ENCODE measurements at regions of chr17 and their contacts with region 1.

Region 1: GRCh38 chr17:82450170-82451106 is at the start of gene CYBC1:
- DNase-seq: peak; percentile 96
- H3K4me3 Mint-ChIP-seq: peak within 1 kb of the TSS; percentile 96
- H3K27ac Mint-ChIP-seq: peak within 1 kb of the TSS; percentile 99
- H3K4me1 Mint-ChIP-seq: peaks cover 49% of the 10 kb centered on the region
- H3K27me3 Mint-ChIP-seq: no peaks in the 10 kb centered on the region
- total RNA-seq, gene CYBC1: 308 to 313 TPM

Region 2: DNA sequence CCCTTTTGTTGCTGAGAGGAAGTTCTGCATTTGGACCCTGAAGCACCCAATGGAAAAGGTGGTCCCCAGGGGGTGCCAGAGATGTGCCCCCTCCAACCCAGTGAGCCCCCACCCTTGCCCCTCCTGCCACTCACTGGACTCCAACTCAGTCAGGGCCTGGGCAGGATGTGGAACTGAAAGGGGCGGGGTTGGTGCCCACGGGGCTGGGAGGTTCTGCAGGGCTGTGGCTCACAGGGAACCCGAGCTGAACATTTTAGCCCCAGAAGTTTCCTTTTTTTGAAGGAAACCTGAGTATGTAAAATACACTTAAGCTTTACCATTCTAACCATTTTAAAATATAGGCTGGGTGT is 16.2 kb before region 1 on chr17:
- CTCF ChIA-PET with region 1: no interaction called
- POLR2A ChIA-PET with region 1: interaction called, 15 read pairs
- DNase-seq: peak; percentile 71
- H3K4me3 Mint-ChIP-seq: no peak overlapping the region
- H3K27ac Mint-ChIP-seq: peak overlapping the region; percentile 78
- H3K4me1 Mint-ChIP-seq: peaks cover 33% of the 10 kb centered on the region
- H3K27me3 Mint-ChIP-seq: no peaks in the 10 kb centered on the region

Region 3: GRCh38 chr17:82477934-82478333 is 27.5 kb after region 1 on chr17:
- CTCF ChIA-PET with region 1: no interaction called
- POLR2A ChIA-PET with region 1: interaction called, 11 read pairs
- DNase-seq: peak; percentile 35
- H3K4me3 Mint-ChIP-seq: no peak overlapping the region
- H3K27ac Mint-ChIP-seq: peak overlapping the region; percentile 66
- H3K4me1 Mint-ChIP-seq: peaks cover 27% of the 10 kb centered on the region
- H3K27me3 Mint-ChIP-seq: no peaks in the 10 kb centered on the region

Region 4: DNA sequence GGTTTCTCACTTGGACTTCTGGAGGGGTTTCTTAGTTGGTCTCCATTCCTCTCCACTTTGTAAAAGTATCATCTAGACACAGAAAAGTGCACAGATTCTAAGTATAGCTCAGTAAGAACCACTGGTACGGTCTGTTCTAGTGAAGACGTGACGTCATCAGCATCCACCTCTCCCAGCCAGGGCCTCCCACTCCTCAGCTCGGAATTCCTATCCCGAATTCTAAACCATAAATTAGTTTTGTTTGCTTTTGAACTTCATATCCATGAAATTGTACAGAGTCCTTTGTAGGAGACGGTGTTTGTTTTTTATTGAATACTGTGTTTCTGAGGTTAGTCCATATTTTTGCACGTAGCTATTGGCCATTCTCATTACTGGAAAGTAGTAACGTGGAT is 94.6 kb after region 1 on chr17:
- CTCF ChIA-PET with region 1: no interaction called
- POLR2A ChIA-PET with region 1: no interaction called
- DNase-seq: no peak
- H3K4me3 Mint-ChIP-seq: no peak overlapping the region
- H3K27ac Mint-ChIP-seq: no peak overlapping the region
- H3K4me1 Mint-ChIP-seq: peaks cover 26% of the 10 kb centered on the region
- H3K27me3 Mint-ChIP-seq: no peaks in the 10 kb centered on the region